H1 (cell line): ENCODE measurements at regions of chr12 and their contacts with region 1.

Region 1: GRCh38 chr12:4276524-4277204 is 3.1 kb downstream of the CCND2 start:
- DNase-seq: peak; percentile 84 to 90
- H3K4me3 ChIP-seq: peak overlapping the region; percentile 90 to 97 (median 96); a peak in 4 of 8 replicates
- H3K27ac ChIP-seq: no peak overlapping the region
- H3K4me1 ChIP-seq: peaks cover 9 to 30% (median 13%) of the 10 kb centered on the region in 4 experiments
- H3K27me3 ChIP-seq: peaks cover 0 to 10% (median 7%) of the 10 kb centered on the region in 4 experiments; a peak in 5 of 7 replicates
- CTCF ChIP-seq: peak; percentile 74 to 92 (median 92)
- EP300 ChIP-seq: peak in 1 of 2 experiments; percentile 85; a peak in 2 of 3 replicates
- POLR2A ChIP-seq: peak in 1 of 2 experiments; percentile 58; a peak in 1 of 3 replicates
- RAD21 ChIP-seq: peak; percentile 97 to 99

Region 2: DNA sequence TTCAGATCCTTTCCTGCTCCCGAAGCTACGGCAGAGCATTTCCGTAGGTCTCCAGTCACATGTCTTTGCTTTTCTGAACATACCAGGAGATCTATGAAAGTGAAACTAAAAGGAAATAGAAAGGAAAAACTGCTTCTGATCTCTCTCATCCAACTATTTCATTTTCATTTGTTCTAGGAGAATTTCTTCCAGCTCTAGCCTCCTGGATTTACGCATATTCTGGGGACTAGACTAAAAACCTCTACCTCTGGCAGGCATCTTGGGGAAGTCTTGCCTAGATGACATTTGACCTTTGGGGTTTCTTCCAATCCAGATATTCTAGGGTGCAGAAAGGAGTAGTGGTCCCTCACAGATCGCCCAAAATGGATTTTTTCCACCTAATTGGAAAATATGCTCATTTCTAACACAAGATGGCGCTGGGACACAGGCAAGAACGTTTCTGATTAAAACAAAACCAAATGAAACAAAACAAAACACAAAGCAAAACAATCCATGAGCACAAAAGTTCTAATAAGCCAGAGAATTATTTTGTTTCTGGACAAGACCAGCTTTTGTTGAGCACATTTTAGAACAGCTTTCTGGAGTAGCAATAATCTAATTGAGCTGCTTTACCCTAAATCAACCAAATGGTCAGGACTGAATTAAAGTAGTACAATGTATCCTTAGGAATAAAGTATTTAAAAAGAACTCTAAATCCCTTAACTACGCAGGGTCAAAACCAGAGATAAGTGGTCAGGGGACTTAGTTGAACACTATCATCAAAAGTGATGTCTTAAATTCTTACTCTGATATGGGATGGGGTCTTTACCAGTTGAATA is 391.2 kb before region 1 on chr12:
- CTCF ChIA-PET with region 1: interaction called, 39 read pairs
- POLR2A ChIA-PET with region 1: interaction called, 6 read pairs
- DNase-seq: no peak
- H3K4me3 ChIP-seq: no peak overlapping the region
- H3K27ac ChIP-seq: no peak overlapping the region
- H3K4me1 ChIP-seq: peaks cover 0 to 2% (median under 1%) of the 10 kb centered on the region in 4 experiments; a peak in 5 of 7 replicates
- H3K27me3 ChIP-seq: no peaks in the 10 kb centered on the region; a peak in 1 of 7 replicates
- CTCF ChIP-seq: peak in 2 of 3 experiments; percentile 67 to 70; a peak in 3 of 4 replicates
- EP300 ChIP-seq: no peak
- POLR2A ChIP-seq: no peak
- RAD21 ChIP-seq: peak; percentile 93

Region 3: GRCh38 chr12:3998968-3999826 is 277.5 kb before region 1 on chr12:
- CTCF ChIA-PET with region 1: interaction called, 35 read pairs
- POLR2A ChIA-PET with region 1: interaction called, 12 read pairs
- DNase-seq: no peak
- H3K4me3 ChIP-seq: no peak overlapping the region
- H3K27ac ChIP-seq: no peak overlapping the region
- H3K4me1 ChIP-seq: 0 out of 7 replicates have a peak, but pooled peaks cover 0 to 2% (median 0%) of the 10 kb centered on the region in 4 experiments
- H3K27me3 ChIP-seq: peaks cover 0 to 3% (median under 1%) of the 10 kb centered on the region in 4 experiments; a peak in 1 of 7 replicates
- CTCF ChIP-seq: no peak
- EP300 ChIP-seq: no peak
- POLR2A ChIP-seq: no peak
- RAD21 ChIP-seq: no peak

Region 4: DNA sequence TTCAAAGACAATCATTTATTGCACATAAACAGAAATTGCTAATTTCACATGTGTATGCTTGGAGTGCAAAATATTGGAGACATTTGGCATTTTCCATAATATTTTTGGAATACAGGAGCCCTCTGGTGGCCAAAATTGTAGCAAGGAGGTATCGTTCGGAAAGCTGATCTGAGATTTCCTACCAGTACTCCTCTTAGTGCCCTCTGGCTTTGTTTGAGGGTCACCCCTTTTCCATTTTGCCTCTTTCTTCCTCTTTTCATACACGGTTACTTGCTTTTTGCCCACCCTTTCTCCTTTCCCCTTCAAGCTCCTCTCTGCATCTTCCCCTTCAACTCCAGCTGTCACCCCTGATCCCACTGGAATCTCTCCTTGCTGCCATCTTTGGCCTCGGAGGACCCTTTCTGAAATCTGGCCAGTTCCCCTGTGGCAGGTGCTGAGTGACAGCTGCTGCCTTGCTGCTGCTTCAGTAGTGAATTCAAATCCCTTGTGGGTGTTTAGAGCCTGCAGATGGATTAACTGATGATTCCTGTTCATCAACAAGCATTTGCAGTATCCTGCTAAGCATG is 238.8 kb before region 1 on chr12:
- CTCF ChIA-PET with region 1: interaction called, 52 read pairs
- POLR2A ChIA-PET with region 1: interaction called, 3 read pairs
- DNase-seq: no peak
- H3K4me3 ChIP-seq: no peak overlapping the region
- H3K27ac ChIP-seq: no peak overlapping the region
- H3K4me1 ChIP-seq: peaks cover 0 to 3% (median 0%) of the 10 kb centered on the region in 4 experiments; a peak in 2 of 7 replicates
- H3K27me3 ChIP-seq: no peaks in the 10 kb centered on the region
- CTCF ChIP-seq: peak in 2 of 3 experiments; percentile 67 to 73; a peak in 3 of 4 replicates
- EP300 ChIP-seq: no peak
- POLR2A ChIP-seq: no peak
- RAD21 ChIP-seq: peak; percentile 72 to 76

Region 5: DNA sequence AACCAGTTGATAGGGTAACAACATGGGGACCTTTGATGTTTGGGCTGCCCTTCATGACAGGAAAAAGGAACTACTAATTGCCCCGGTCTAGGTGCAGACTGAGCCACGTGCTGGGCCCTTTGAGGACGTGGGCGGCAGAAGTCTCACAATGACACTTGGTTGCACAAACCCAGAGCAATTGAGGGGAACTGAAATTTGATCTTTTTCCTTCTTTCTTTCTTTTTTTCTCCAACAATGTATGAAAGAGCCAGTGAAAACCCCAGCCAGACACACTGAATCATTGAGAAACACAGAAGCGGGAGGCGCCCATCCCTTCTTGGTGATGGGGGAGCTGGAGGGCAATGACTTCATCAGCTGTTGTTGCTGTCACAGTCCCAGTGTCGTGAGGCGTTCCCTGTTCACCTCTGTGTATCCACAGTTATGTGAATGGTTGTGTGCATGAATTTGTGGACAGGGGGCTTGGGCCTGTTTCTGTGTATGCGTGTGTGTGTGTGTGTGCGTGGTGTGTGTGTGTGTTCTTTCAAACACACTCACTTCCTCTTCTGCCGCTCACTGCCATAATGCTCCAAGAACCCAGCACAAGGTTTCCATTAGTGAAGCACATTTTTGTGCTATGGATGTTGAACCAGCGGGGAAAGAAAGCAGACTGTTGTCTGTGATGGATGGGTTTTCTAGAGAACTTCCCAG is 140.6 kb before region 1 on chr12:
- CTCF ChIA-PET with region 1: interaction called, 34 read pairs
- POLR2A ChIA-PET with region 1: interaction called, 41 read pairs
- DNase-seq: no peak
- H3K4me3 ChIP-seq: no peak overlapping the region
- H3K27ac ChIP-seq: no peak overlapping the region
- H3K4me1 ChIP-seq: peaks cover 11 to 36% (median 19%) of the 10 kb centered on the region in 4 experiments
- H3K27me3 ChIP-seq: no peaks in the 10 kb centered on the region
- CTCF ChIP-seq: no peak
- EP300 ChIP-seq: no peak
- POLR2A ChIP-seq: no peak
- RAD21 ChIP-seq: no peak

Region 6: DNA sequence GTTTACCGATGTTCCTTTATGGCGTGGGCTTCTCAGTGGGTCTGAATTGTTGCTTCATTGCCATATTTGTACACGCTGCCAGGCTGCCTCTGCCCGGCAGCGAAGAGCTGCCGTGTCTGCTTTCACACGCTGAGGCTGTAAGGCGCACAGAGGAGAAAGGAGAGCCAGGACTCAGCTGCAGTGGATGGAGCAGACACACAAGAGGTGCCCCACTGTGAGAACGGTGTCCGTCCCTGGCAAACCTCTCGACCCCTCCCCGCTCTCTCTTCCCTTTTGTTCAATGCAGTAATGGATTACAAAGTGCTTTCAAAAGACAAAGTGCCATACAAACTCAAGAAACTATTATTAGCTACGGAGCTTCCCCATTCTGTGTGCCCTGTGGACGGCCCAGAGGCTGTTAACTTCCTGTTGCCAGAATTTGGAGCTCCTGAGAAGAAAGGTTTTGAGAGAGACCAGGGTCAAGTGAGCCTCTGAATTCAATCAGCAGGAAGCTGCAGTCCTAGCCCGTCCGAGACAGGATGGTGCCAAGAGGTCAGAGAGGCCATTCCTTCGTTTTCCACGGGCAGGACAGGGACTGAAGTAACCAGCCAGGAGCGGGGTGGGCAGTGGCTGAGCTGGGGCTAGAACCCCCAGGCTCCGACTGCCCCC is 12.7 kb after region 1 on chr12:
- CTCF ChIA-PET with region 1: interaction called, 12 read pairs
- POLR2A ChIA-PET with region 1: interaction called, 531 read pairs
- DNase-seq: no peak
- H3K4me3 ChIP-seq: no peak overlapping the region
- H3K27ac ChIP-seq: no peak overlapping the region
- H3K4me1 ChIP-seq: peaks cover 0 to 9% (median 0%) of the 10 kb centered on the region in 4 experiments; a peak in 4 of 7 replicates
- H3K27me3 ChIP-seq: no peaks in the 10 kb centered on the region
- CTCF ChIP-seq: no peak
- EP300 ChIP-seq: no peak
- POLR2A ChIP-seq: no peak
- RAD21 ChIP-seq: no peak